Activated naive CD8-positive, alpha-beta T cell treated with anti-CD3 and anti-CD28 coated beads, Interleukin-2, amount 10 ng/mL, durations not matched to agents 7 days and 5 days (primary cell): ENCODE measurements at regions of chr14 and their contacts with region 1.

Region 1: DNA sequence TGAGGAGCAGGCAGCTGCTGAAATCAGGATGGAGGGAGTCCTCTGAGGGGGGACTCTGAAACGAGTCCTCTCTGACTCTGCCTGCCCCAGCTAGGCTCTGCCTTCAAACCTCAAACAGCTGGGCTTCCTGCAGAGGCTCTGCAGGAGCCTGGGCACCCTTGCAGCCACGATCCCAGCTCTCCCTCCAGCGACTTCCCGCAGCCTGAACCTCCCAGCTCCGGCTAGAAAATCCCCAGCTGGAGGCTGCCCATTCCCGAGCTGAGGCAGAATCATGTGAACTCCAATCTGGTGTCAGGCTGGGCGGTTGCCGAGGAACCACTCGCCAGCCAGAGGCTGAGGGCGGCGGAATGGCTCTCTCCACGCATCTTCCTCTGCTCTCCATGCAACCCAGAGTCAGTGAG is at the start of gene GPR68:
- DNase-seq: peak; percentile 64
- ATAC-seq: peak; percentile 13
- H3K4me3 Mint-ChIP-seq: peak within 1 kb of the TSS; percentile 88
- H3K27ac Mint-ChIP-seq: peak within 1 kb of the TSS; percentile 90
- H3K4me1 Mint-ChIP-seq: peaks cover 78% of the 10 kb centered on the region
- H3K27me3 Mint-ChIP-seq: no peaks in the 10 kb centered on the region
- total RNA-seq, gene GPR68: 23.0 to 28.0 TPM

Region 2: DNA sequence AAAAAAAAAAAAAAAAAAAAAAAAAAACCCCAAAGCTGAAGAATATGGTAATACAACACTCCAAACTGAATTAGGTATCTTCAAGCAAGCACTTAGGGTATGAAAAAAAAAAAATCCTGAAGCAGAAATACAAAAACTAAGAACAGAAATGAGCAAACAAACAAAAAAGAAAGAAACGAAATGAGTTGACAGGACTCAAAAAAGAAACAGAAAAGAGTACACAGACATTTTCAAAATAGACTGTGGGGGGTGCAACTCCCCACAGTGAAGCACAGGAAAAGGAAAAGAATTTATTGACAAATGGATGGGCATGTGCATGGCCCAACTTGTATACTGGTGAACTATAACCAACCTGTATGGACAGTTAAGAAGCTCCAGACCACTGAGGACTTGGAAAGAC is 208.6 kb before region 1 on chr14:
- POLR2A ChIA-PET with region 1: no interaction called
- DNase-seq: no peak
- ATAC-seq: no peak
- H3K4me3 Mint-ChIP-seq: peak overlapping the region; percentile 6
- H3K27ac Mint-ChIP-seq: peak overlapping the region; percentile 59
- H3K4me1 Mint-ChIP-seq: peaks cover 51% of the 10 kb centered on the region
- H3K27me3 Mint-ChIP-seq: no peaks in the 10 kb centered on the region

Region 3: GRCh38 chr14:91193069-91193468 is 51.4 kb before region 1 on chr14:
- POLR2A ChIA-PET with region 1: interaction called, 87 read pairs
- DNase-seq: no peak
- ATAC-seq: no peak
- H3K4me3 Mint-ChIP-seq: no peak overlapping the region
- H3K27ac Mint-ChIP-seq: no peak overlapping the region
- H3K4me1 Mint-ChIP-seq: peaks cover 36% of the 10 kb centered on the region
- H3K27me3 Mint-ChIP-seq: no peaks in the 10 kb centered on the region

Region 4: DNA sequence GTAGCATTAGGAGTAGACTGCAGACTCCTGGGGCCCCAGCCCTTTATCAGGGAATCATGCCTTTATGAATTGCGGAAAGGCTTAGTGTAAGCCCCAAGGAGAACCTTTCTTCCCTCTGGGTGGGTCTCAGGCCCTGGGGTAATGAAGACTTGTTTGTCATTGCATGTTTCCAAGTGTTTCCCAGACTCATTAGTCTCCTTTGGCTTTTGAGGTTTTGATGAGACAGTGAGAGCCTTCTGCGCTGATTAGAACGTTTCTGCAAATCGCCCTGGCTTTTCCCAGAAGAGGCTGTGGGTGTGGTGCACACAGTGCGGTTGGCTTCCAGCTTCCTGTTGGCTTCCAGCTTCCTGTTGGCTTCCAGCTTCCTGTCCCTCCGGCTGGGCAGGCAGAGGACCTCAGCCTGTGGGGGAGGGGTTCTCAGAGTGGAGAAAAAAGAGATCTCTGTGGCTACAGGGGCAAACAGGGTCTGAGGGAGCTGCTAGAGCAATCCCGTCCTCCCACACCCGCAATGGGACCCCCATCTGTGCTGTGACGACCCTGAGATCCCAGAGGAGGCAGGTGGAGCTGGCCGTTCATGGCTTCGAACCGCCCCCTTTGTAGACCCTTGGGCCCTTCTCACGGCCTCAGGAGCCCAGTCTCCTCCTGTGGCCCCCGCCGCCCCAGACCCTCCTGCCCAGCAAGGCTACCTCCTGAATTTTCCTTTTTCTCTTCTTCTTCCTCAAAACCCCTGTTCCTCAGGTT is 42.1 kb before region 1 on chr14:
- POLR2A ChIA-PET with region 1: interaction called, 17 read pairs
- DNase-seq: peak; percentile 75
- ATAC-seq: peak; percentile 20
- H3K4me3 Mint-ChIP-seq: peak overlapping the region; percentile 56
- H3K27ac Mint-ChIP-seq: peak overlapping the region; percentile 78
- H3K4me1 Mint-ChIP-seq: peaks cover 47% of the 10 kb centered on the region
- H3K27me3 Mint-ChIP-seq: no peaks in the 10 kb centered on the region

Region 5: DNA sequence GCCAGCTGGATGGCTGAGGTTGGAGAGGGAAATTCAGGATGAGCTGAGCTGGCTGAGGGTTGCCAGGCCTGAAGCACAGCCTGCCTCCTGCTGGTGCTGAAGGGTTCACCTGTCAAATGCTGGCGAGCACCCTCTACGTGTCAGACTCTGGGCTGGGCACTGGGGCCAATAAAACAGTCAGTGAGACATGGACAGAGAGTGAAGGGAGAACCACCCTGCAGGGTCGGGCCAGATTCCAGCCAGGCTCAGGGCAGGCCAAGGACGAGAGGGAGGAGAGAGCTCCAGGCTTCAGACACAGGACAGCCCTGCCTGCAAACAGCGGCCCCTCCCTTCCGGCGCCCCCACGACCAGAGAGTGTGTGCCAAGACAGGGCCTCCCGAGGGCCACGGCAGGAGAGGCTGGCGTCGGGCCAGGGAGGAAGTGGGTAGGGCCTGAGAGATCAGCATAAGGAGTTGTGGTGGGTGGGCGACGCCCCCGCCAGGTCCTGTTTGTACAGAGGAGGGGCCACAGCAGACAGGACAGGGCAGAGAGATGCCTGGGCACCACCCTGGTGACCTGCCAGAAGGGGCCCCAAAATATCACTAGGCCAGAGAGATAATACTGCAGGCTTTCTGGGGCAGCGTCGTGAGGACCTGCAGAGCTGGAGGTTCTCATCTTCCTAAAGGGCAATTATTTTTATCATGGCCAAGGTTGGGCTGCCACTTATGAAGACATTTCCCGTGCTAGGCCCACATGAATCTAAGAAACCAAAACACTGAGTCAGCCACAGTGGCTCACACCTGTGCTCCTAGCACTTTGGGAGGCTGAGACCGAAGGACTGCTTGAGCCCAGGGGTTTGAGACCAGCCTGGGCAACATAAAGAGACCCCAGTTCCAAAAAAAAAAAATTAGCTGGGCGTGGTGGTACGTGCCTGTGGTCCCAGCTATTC is 73.1 kb after region 1 on chr14:
- POLR2A ChIA-PET with region 1: interaction called, 16 read pairs
- DNase-seq: peak; percentile 80
- ATAC-seq: peak; percentile 65
- H3K4me3 Mint-ChIP-seq: peak overlapping the region; percentile 77
- H3K27ac Mint-ChIP-seq: peak overlapping the region; percentile 95
- H3K4me1 Mint-ChIP-seq: peaks cover 52% of the 10 kb centered on the region
- H3K27me3 Mint-ChIP-seq: no peaks in the 10 kb centered on the region